HAP-1 (cell line): ENCODE measurements at regions of chr1 and their contacts with region 1.

Region 1: DNA sequence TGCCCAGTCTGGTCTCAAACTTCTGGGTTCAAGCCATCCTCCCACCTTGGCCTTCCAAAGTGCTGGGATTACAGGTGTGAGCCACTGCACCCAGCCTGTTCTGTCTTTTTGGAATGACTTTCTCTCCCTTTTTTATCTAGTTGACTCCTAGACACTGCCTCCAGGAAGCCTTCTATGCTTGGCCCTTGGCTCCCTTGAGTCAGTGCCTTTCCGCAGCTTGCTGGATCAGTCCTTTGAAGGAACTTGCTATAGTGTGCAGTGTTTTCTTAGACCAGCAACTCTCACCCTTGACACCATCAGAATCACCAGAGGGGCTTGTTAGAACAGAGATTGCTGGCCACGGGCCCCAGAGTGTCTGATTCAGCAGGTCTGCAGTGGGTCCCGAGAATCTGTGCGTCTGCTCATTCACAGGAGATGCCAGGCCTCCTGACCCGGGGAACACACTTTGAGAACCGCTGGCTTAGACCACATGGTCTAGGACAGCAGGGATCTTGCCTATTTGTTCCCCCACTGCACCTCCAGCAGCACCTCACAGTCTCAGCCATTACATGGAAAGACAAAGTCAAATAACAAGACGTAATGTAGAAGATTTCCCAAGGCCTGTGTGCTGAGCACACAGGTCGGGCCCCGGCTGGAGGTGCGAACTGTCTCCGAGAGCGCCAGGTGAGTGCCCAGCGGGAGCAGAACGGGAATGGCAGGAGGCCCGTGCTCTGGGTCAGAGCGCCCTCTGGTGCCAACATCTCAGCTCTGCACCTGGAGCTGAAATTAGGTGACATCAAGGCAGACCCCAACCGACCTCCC is 27.4 kb upstream of the CTPS1 start:
- DNase-seq: peak; percentile 67 to 86
- H3K4me3 ChIP-seq: no peak overlapping the region
- H3K4me1 ChIP-seq: no peaks in the 10 kb centered on the region
- H3K27me3 ChIP-seq: no peaks in the 10 kb centered on the region

Region 2: GRCh38 chr1:40592107-40592803 is 359.9 kb before region 1 on chr1:
- in situ Hi-C with region 1: loop called (anchors 10 kb)
- DNase-seq: peak; percentile 41 to 42
- H3K4me3 ChIP-seq: no peak overlapping the region
- H3K4me1 ChIP-seq: no peaks in the 10 kb centered on the region
- H3K27me3 ChIP-seq: 0 out of 2 replicates have a peak, but pooled peaks cover 4% of the 10 kb centered on the region

Region 3: DNA sequence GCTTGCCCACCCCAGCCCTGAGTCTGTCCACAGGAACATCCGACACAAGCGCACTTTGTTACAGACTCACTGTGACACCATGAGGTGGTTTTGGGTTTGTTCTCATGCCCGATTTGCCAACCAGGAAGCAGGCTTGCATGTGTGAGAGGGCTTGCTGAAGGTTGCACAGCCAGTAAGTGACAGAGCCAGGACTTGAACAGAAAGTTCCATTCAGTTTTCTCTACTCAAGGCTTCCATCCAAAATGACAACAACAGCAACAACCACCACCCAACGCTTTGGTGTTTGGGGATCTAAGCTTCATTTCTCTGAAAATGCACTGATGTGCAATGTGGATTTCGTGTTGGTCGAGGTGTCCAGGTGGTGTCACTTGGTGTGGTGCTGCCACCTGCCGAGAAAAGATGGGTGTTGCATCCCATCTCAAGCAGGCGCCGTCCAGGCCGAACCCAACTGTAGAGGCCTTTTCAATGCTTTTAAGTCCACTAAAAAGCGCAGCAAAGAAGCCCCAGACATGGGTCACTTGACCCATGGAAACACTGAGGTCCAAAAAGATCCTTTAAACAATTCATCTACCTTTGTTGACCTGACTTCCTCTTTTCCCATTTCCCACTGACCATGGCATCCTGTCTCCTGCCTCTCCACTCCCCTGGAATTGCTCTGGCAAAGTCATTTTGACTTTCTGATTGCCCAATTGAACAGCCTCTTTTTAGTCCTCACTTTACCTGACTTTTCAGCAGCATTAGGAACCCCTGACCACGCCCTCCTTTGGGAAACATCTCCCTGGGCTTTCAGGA is 102.1 kb before region 1 on chr1:
- in situ Hi-C with region 1: loop called (anchors 5 kb)
- DNase-seq: peak; percentile 65 to 83
- H3K4me3 ChIP-seq: no peak overlapping the region
- H3K4me1 ChIP-seq: no peaks in the 10 kb centered on the region
- H3K27me3 ChIP-seq: no peaks in the 10 kb centered on the region

Region 4: DNA sequence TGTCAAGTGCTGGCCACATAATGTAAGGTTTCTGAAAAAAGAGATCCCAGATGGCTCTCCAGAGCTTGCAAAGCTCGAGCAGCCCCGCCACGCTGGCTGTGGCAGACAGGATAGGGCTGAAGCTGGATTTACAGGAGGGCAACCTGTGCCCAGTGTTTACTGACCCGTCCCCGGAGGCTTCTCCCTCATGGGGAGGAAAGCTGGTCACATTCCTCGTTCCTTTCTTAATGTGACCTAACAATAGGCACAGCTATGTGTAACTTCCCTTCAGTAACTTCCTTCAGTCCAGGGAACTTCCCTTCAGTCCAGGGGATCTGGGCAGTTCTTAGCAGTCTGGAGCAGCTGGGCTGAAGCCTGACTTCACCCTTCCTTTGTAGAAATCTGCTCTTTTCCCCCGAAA is 61.7 kb after region 1 on chr1:
- in situ Hi-C with region 1: no loop called
- DNase-seq: no peak
- H3K4me3 ChIP-seq: no peak overlapping the region
- H3K4me1 ChIP-seq: no peaks in the 10 kb centered on the region
- H3K27me3 ChIP-seq: no peaks in the 10 kb centered on the region